Activated naive CD4-positive, alpha-beta T cell treated with anti-CD3 and anti-CD28 coated beads, Interleukin-2, amount 10 ng/mL, durations not matched to agents 7 days and 5 days (primary cell): ENCODE measurements at regions of chr19 and their contacts with region 1.

Region 1: DNA sequence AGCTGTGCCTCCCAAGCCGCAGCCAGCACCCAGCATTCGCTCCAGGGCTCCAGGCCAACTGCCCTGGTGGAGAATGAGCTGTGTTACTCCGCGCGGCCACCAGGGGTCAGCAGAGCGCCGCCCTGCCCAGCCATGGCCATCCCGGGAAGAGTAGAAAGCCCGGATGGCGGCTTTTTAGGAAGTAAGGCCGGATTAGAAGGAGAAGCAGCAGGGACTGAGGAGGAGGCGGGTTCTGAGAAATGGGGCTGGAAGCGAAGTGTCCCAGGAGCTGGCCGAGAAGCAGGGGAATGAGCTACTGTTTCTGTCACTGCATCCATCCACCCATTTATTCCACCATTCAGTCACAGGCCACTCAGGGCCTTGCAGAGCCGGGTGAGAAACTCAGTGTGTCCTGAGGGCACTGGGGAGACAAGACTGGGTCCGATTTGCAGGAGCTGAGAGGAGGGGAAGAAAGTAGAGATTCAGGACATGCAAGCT is 6.6 kb upstream of the NPAS1 start:
- DNase-seq: peak; percentile 72
- H3K4me3 Mint-ChIP-seq: no peak overlapping the region
- H3K27ac Mint-ChIP-seq: no peak overlapping the region
- H3K4me1 Mint-ChIP-seq: peaks cover 4% of the 10 kb centered on the region
- H3K27me3 Mint-ChIP-seq: peaks cover 75% of the 10 kb centered on the region

Region 2: GRCh38 chr19:46984077-46985010 is 28.7 kb before region 1 on chr19:
- CTCF ChIA-PET with region 1: interaction called, 10 read pairs
- DNase-seq: no peak
- H3K4me3 Mint-ChIP-seq: no peak overlapping the region
- H3K27ac Mint-ChIP-seq: no peak overlapping the region
- H3K4me1 Mint-ChIP-seq: peaks cover 7% of the 10 kb centered on the region
- H3K27me3 Mint-ChIP-seq: no peaks in the 10 kb centered on the region

Region 3: DNA sequence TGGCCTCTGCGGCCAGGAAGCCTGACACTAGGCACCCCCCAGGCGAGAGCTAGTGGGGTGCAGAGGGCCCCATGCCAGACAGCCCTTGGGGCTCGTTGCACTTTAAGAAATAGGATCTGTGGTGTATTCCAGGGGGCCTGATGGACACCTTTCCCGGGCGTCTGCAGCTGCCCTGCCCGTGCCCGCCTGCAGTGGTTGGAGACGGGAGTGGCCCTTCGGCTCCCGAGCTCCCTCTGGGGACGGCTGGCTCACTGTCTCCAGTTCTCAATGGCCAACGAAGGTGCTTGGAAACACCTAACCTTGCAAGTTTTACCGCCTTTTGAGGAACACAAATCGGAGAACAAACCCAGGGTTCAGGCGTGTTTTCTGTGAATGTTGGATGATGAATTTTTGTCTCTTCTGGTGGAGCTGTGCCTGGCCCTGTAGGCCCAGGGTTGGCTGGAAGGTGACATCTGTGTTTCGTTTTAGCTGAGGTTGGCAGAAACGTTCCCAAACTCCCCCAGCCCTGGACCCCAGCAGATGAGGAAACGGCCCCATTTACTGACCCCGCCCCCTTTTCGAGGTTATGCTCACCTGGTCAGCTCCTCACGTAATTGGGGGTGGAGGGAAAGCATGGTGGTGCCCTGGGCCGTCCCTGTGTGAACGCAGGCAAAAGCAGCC is 10.8 kb before region 1 on chr19:
- CTCF ChIA-PET with region 1: interaction called, 14 read pairs
- DNase-seq: no peak
- H3K4me3 Mint-ChIP-seq: no peak overlapping the region
- H3K27ac Mint-ChIP-seq: no peak overlapping the region
- H3K4me1 Mint-ChIP-seq: no peaks in the 10 kb centered on the region
- H3K27me3 Mint-ChIP-seq: peaks cover 50% of the 10 kb centered on the region

Region 4: GRCh38 chr19:47028195-47028601 is 15.1 kb after region 1 on chr19:
- CTCF ChIA-PET with region 1: interaction called, 12 read pairs
- DNase-seq: no peak
- H3K4me3 Mint-ChIP-seq: no peak overlapping the region
- H3K27ac Mint-ChIP-seq: no peak overlapping the region
- H3K4me1 Mint-ChIP-seq: peaks cover 4% of the 10 kb centered on the region
- H3K27me3 Mint-ChIP-seq: peaks cover 95% of the 10 kb centered on the region

Region 5: GRCh38 chr19:47124937-47125668 is 112.0 kb after region 1 on chr19:
- CTCF ChIA-PET with region 1: interaction called, 23 read pairs
- DNase-seq: no peak
- H3K4me3 Mint-ChIP-seq: no peak overlapping the region
- H3K27ac Mint-ChIP-seq: no peak overlapping the region
- H3K4me1 Mint-ChIP-seq: peaks cover 7% of the 10 kb centered on the region
- H3K27me3 Mint-ChIP-seq: peaks cover 10% of the 10 kb centered on the region